ENCODE measurements at regions of chr17 and their contacts with region 1.

Region 1: GRCh38 chr17:75632863-75633485 is at the start of gene SMIM5:
- DNase-seq: peak; percentile 93
- CTCF ChIP-seq: peak; percentile 93

Region 2: DNA sequence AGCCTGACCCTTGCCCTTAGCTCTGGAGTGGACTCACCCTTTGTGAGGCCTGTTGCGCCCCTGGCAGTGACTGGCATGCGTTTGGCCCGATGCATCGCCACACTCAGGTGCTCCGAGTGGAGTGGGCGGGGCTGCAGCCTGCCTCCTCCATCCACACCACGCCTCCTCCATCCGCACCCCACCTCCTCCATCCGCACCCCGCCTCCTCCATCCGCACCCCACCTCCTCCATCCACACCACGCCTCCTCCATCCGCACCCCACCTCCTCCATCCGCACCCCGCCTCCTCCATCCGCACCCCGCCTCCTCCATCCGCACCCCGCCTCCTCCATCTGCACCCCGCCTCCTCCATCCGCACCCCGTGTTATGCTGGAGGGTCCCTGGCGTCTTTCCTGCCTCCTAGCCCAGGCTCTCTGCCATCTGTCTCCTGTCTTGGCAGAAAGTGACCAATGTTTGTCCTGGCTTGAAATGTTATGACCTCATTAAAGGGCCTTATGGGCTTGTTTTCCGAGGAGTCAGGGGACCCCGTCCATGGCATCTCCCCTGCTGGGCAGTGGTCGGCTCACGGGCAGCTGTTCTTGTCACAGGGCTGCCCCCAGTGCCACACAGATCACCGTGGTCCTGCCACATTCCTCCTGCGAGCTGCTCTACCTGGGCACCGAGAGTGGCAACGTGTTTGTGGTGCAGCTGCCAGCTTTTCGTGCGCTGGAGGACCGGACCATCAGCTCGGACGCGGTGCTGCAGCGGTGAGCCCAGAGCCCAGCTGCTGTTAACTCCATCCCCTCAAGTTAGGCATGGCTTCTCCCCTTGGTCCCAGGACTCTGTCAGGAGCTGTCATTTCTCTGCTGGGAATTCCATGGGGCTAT is 74.1 kb before region 1 on chr17:
- CTCF ChIA-PET with region 1: no interaction called
- POLR2A ChIA-PET with region 1: no interaction called
- DNase-seq: no peak
- CTCF ChIP-seq: no peak

Region 3: DNA sequence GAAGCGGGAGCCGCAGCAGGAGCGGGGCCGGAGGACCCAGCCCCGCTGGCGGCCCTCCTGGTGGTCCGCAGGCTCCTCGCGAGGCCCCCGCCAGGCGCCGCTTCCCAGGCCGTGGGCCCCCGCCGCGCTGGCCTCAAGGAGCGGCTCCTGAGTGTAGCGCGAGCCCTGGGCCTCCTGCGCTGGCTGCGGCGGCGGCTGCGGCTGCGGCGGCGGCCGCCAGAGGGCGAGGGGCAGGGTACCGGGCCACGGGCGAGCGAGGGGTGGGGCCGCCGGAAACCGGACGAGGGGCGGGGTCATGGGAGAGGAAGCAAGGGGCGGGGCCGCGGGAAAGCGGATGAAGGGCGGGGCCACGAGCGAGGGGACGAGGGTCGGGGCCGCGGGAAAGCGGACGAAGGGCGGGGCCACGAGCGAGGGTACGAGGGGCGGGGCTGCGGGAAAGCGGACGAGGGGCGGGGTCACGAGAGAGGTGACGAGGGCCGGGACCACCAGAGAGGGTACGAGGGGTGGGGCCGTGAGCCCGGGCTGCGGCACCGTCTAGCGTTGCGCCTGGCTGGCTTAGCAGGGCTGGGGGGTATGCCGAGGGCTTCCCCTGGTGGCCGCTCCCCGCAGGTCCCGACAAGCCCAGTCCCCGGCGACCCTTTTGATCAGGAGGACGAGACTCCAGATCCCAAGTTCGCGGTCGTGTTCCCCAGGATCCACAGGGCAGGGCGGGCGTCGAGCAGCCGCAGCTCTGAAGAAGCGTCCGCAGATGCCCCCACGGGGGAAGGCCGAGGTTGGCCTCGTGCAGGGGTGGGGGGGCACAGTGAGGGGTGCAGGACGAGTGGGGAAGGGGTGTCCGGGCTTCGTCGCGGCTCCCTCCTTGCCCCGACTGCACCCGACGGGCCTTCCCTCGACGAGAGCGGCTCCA is 43.7 kb before region 1 on chr17:
- CTCF ChIA-PET with region 1: interaction called, 15 read pairs
- POLR2A ChIA-PET with region 1: no interaction called
- DNase-seq: peak; percentile 100
- CTCF ChIP-seq: peak; percentile 81

Region 4: GRCh38 chr17:75614006-75614405 is 19.0 kb before region 1 on chr17:
- CTCF ChIA-PET with region 1: interaction called, 82 read pairs
- POLR2A ChIA-PET with region 1: no interaction called
- DNase-seq: no peak
- CTCF ChIP-seq: no peak

Region 5: GRCh38 chr17:75667021-75667790 is 34.2 kb after region 1 on chr17 and contains the starts of genes RECQL5 and SAP30BP:
- CTCF ChIA-PET with region 1: interaction called, 463 read pairs
- POLR2A ChIA-PET with region 1: no interaction called
- DNase-seq: peak; percentile 94
- CTCF ChIP-seq: no peak

Region 6: DNA sequence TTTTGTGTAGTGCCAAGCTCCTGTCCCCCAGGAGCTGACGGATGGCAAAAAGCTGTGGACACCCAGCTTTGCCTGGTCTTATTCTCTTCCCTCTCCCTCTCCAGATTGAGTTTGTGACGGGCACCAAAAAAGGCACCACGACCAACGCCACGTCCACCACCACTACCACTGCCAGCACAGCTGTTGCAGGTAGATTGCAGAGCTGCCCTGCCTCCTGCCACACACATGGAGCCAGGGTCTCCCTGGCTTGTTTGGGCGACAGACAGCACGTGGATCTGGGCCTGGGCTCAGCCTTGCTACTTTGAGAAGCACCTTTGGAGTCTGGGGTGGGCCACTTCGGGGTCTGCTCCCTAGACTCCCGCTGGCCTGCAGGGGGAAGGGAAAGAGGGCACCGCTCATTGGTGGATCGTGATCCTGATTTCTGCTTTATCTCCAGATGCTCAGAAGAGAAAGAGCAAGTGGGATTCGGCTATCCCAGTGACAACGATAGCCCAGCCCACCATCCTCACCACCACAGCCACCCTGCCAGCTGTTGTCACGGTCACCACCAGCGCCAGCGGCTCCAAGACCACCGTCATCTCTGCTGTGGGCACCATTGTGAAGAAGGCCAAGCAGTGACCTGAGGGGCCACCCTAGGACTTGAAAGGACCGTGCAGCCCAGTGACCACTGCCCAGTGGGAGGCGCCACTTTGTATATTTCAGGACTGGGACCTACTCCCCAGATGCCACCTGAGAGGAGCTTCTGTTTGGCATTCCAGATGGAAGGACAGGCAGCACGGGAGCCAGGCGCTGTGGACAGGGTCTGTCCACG is 73.1 kb after region 1 on chr17:
- CTCF ChIA-PET with region 1: interaction called, 16 read pairs
- POLR2A ChIA-PET with region 1: no interaction called
- DNase-seq: no peak
- CTCF ChIP-seq: no peak

Region 7: DNA sequence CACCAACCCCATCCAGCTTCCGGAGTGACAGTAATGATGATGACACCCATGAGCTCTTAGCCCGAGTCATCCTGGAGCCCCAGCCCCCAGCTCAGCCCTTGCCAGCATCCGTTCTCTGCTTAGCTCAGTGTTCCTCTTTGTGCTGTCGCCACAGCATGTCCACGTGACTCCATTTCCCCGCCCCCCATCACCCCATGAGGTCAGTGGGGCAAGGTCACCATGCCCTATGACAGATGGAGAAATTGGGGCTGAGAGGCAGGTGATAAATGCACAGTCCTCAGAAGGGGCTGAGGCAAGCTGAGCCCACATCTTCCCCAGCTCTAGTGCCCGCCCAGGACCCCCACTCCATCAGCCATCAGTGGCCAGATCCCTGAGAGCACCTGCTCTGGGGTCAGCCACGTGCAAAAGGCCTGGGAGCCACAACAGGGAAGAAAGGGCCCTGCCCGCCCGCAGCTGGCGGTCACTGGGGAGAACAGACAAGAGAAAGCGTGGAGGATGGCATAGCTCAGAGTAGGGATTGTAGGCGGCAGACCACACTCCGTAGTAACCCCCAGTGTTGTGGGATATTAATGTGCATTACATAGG is 105.3 kb after region 1 on chr17:
- CTCF ChIA-PET with region 1: interaction called, 856 read pairs
- POLR2A ChIA-PET with region 1: no interaction called
- DNase-seq: peak; percentile 53
- CTCF ChIP-seq: no peak

Measured in GM10248 (cell line).